ENCODE measurements at regions of chr5 and their contacts with region 1.

Region 1: GRCh38 chr5:103475629-103476240 is 86.9 kb downstream of the NUDT12 start:
- DNase-seq: no peak
- H3K4me3 ChIP-seq: no peak overlapping the region
- H3K27ac ChIP-seq: no peak overlapping the region
- H3K4me1 ChIP-seq: no peaks in the 10 kb centered on the region
- H3K27me3 ChIP-seq: no peaks in the 10 kb centered on the region
- CTCF ChIP-seq: peak; percentile 66 to 69

Region 2: DNA sequence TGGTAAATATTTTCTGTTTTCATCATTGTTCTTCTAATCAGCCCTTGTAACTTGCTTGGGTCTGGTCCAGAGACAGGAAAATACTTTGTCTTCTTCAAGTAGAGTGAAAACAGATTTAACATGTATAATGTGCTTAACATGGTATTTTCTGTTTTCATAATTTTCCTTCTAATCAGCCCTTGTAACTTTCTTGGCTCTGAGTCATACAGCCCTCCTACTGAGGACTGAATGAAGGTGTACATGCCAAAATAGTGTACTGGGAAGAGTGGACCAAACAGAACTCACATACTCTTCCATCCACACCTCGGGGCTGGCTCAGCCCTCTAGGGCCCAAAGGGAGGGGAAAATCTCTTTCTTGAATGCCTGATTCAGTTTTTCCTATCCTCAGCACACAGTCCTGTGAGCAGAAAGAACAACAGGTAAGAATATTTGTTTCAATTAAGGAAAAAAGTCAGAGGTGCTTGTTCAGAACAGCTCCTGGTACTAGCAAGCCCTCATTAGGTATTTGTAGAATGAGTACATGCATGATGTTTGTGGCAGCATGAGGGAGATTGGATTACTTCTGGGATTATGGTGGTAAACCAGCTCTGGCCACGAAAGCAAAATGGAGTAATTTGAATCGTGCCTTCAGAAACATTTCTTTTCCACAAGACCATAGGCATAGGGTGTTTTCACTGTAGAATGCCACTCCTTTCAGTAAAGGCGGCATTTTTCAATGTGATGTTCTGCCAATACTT is 241.3 kb before region 1 on chr5:
- intact Hi-C with region 1: loop called (anchors 2 kb)
- DNase-seq: no peak
- H3K4me3 ChIP-seq: no peak overlapping the region
- H3K27ac ChIP-seq: no peak overlapping the region
- H3K4me1 ChIP-seq: no peaks in the 10 kb centered on the region
- H3K27me3 ChIP-seq: no peaks in the 10 kb centered on the region
- CTCF ChIP-seq: no peak

Region 3: GRCh38 chr5:103295871-103296270 is 179.9 kb before region 1 on chr5:
- intact Hi-C with region 1: no loop called
- DNase-seq: no peak
- H3K4me3 ChIP-seq: no peak overlapping the region
- H3K27ac ChIP-seq: no peak overlapping the region
- H3K4me1 ChIP-seq: no peaks in the 10 kb centered on the region
- H3K27me3 ChIP-seq: no peaks in the 10 kb centered on the region
- CTCF ChIP-seq: no peak

Region 4: DNA sequence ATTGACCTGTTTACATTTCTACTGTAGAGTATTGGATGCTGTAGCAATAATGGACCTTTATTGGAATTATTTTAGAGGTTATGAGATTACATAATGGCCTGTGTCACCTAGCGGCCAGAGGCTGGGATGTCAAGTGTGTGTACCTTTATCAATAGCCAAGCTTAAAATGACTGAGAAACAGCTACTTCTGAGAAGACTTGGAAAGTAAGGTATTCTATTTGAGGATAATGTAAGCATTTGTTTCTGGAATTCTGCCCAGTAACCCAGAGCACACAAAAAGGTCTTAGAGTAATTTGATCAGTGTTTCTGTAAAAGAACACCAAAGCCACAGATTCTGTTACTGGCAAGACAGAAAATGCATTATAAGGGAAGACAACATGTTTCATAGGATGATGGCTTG is 100.4 kb before region 1 on chr5:
- intact Hi-C with region 1: no loop called
- DNase-seq: no peak
- H3K4me3 ChIP-seq: no peak overlapping the region
- H3K27ac ChIP-seq: no peak overlapping the region
- H3K4me1 ChIP-seq: no peaks in the 10 kb centered on the region
- H3K27me3 ChIP-seq: no peaks in the 10 kb centered on the region
- CTCF ChIP-seq: no peak

Region 5: DNA sequence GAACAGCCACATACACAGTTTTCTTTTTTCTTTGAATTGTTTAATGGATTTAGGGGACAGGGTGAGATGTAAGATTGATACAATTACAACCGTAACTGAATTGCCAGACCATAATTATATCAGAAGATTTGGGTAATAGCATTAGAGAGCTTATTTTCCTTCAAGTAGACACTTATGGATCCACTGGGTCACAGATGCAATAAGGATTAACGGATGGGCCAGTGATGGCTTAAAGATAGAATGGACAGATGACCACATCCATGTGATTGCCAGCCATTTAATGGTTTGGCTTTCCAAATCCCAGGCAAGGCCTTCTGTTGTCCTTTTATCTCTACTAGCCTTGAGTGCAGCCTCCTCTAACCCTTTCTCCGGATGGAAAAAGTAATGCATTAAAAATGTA is 181.6 kb after region 1 on chr5:
- intact Hi-C with region 1: no loop called
- DNase-seq: no peak
- H3K4me3 ChIP-seq: no peak overlapping the region
- H3K27ac ChIP-seq: no peak overlapping the region
- H3K4me1 ChIP-seq: no peaks in the 10 kb centered on the region
- H3K27me3 ChIP-seq: no peaks in the 10 kb centered on the region
- CTCF ChIP-seq: no peak

Measured in tibial artery (tissue), 4 donors.